ENCODE measurements at regions of chr10 and their contacts with region 1.

Region 1: DNA sequence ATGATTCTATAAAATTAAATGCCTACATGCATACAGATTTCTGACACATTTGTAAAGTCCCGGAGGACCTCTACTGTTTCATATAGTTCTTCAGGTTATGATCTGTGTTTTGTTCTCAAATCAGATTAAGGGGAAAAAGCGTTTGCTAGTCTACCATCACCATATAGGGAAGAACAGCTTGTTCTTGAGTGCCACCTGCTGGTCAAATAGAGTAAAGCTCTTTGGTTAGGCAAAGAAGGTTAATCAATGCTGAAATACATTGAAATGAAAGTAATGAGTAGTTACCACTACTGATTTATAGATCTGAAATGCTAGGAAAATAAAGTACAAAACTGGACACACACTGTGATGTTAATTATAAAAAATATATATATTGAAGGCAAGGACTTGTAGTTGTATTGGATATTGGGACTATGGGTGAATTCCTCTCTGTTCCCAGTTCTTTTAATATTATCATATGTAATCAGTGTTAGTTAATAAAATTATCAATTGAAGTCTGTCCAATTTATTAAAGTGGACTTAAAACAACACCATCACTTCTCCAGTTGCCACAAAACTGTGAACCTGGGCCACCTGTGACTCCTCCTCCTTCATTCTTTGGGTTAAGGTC is 72.6 kb upstream of the PDLIM1 start:
- DNase-seq: peak; percentile 77
- ATAC-seq: peak; percentile 79
- H3K4me3 ChIP-seq: no peak overlapping the region
- H3K27ac ChIP-seq: no peak overlapping the region
- H3K4me1 ChIP-seq: no peaks in the 10 kb centered on the region
- H3K27me3 ChIP-seq: peaks cover 3% of the 10 kb centered on the region
- CTCF ChIP-seq: peak; percentile 94
- POLR2A ChIP-seq: peak; percentile 41; the same call in 1 of the 2 replicates
- RAD21 ChIP-seq: peak; percentile 99

Region 2: DNA sequence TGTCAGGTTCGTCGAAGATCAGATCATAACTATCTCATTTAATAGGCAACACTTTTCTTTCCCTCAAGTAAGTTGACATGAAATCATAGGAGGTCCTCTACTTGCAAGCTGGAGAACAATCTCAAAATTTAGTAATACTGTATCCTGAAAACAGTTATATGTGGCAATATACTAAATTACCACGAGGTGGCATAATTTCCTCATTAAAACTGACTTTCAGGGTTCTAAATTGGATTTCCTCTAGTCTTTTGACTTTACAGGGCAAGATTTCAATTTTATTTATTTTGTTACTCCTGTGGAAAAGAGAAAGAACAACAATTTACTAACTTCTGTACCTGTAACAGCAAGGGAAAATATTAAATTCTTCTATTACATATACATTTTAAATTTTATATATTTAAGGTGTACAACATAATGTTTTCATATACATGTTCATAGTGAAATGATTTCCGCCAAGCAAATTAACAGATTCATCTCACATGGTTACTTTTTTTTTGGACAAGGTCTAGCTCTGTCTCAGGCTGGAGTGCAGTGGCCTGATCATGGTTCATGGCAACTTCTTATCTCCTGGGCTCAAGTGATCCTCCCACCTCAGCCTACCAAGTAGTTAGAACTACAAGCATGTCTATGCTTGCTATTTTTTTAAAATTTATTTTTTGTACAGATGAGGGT is 733.3 kb before region 1 on chr10:
- CTCF ChIA-PET with region 1: no interaction called
- POLR2A ChIA-PET with region 1: no interaction called
- dilution Hi-C with region 1: no loop called
- in situ Hi-C with region 1: no loop called
- intact Hi-C with region 1: loop called (anchors 10 kb)
- DNase-seq: peak; percentile 12
- ATAC-seq: no peak
- H3K4me3 ChIP-seq: no peak overlapping the region
- H3K27ac ChIP-seq: no peak overlapping the region
- H3K4me1 ChIP-seq: no peaks in the 10 kb centered on the region
- H3K27me3 ChIP-seq: no peaks in the 10 kb centered on the region
- CTCF ChIP-seq: peak; percentile 59
- POLR2A ChIP-seq: no peak
- RAD21 ChIP-seq: peak; percentile 47

Region 3: GRCh38 chr10:95201736-95202135 is 161.7 kb before region 1 on chr10:
- CTCF ChIA-PET with region 1: interaction called, 12 read pairs
- POLR2A ChIA-PET with region 1: interaction called, 7 read pairs
- dilution Hi-C with region 1: no loop called
- in situ Hi-C with region 1: no loop called
- intact Hi-C with region 1: no loop called
- DNase-seq: peak; percentile 59
- ATAC-seq: peak; percentile 92
- H3K4me3 ChIP-seq: no peak overlapping the region
- H3K27ac ChIP-seq: no peak overlapping the region
- H3K4me1 ChIP-seq: no peaks in the 10 kb centered on the region
- H3K27me3 ChIP-seq: no peaks in the 10 kb centered on the region
- CTCF ChIP-seq: peak; percentile 70
- POLR2A ChIP-seq: no peak
- RAD21 ChIP-seq: peak; percentile 80

Region 4: GRCh38 chr10:95279042-95279820 is 84.2 kb before region 1 on chr10:
- CTCF ChIA-PET with region 1: interaction called, 5 read pairs
- POLR2A ChIA-PET with region 1: interaction called, 10 read pairs
- dilution Hi-C with region 1: no loop called
- in situ Hi-C with region 1: no loop called
- intact Hi-C with region 1: loop called (anchors 5 kb)
- DNase-seq: peak; percentile 81
- ATAC-seq: peak; percentile 57
- H3K4me3 ChIP-seq: no peak overlapping the region
- H3K27ac ChIP-seq: peak overlapping the region; percentile 89; the same call in 1 of the 2 replicates
- H3K4me1 ChIP-seq: peaks cover 32% of the 10 kb centered on the region
- H3K27me3 ChIP-seq: no peaks in the 10 kb centered on the region
- CTCF ChIP-seq: no peak
- POLR2A ChIP-seq: no peak
- RAD21 ChIP-seq: no peak

Region 5: GRCh38 chr10:95374597-95375209 is 11.3 kb after region 1 on chr10:
- CTCF ChIA-PET with region 1: interaction called, 18 read pairs
- POLR2A ChIA-PET with region 1: no interaction called
- dilution Hi-C with region 1: no loop called
- in situ Hi-C with region 1: no loop called
- intact Hi-C with region 1: no loop called
- DNase-seq: peak; percentile 57
- ATAC-seq: peak; percentile 84; the same call in 1 of the 2 replicates
- H3K4me3 ChIP-seq: no peak overlapping the region
- H3K27ac ChIP-seq: no peak overlapping the region
- H3K4me1 ChIP-seq: no peaks in the 10 kb centered on the region
- H3K27me3 ChIP-seq: peaks cover 30% of the 10 kb centered on the region
- CTCF ChIP-seq: peak; percentile 63
- POLR2A ChIP-seq: no peak
- RAD21 ChIP-seq: peak; percentile 67

Region 6: GRCh38 chr10:96097865-96098264 is 734.5 kb after region 1 on chr10:
- CTCF ChIA-PET with region 1: no interaction called
- POLR2A ChIA-PET with region 1: no interaction called
- dilution Hi-C with region 1: no loop called
- in situ Hi-C with region 1: no loop called
- intact Hi-C with region 1: no loop called
- DNase-seq: no peak
- ATAC-seq: no peak
- H3K4me3 ChIP-seq: no peak overlapping the region
- H3K27ac ChIP-seq: no peak overlapping the region
- H3K4me1 ChIP-seq: no peaks in the 10 kb centered on the region
- H3K27me3 ChIP-seq: peaks cover 2% of the 10 kb centered on the region
- CTCF ChIP-seq: no peak
- POLR2A ChIP-seq: no peak
- RAD21 ChIP-seq: no peak